ENCODE measurements at regions of chr11 and their contacts with region 1.

Region 1: DNA sequence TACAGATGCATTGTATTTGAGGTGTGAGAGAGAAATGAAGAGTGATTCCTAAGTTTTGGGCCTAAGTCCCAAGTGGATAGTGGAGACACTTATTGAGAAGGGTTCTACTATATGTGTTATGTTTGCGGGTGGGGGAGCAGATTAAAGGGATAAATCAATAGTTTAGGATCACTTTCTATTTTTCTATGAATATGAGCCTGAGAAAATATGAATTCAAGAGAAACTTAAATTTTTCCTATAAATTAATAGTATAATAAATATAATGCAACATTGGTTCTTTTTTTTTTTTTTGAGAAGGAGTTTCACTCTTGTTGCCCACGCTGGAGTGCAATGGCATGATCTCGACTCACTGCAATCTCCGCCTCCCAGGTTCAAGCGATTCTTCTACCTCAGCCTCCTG is 31.3 kb downstream of the AMBRA1 start:
- DNase-seq: no peak
- H3K4me3 ChIP-seq: no peak overlapping the region
- H3K4me3 Mint-ChIP-seq: no peak overlapping the region
- H3K27ac Mint-ChIP-seq: peak overlapping the region; percentile 3
- H3K4me1 ChIP-seq: peaks cover 17% of the 10 kb centered on the region
- H3K4me1 Mint-ChIP-seq: peaks cover 22% of the 10 kb centered on the region
- H3K27me3 ChIP-seq: no peaks in the 10 kb centered on the region
- H3K27me3 Mint-ChIP-seq: no peaks in the 10 kb centered on the region
- CTCF ChIP-seq: no peak

Region 2: DNA sequence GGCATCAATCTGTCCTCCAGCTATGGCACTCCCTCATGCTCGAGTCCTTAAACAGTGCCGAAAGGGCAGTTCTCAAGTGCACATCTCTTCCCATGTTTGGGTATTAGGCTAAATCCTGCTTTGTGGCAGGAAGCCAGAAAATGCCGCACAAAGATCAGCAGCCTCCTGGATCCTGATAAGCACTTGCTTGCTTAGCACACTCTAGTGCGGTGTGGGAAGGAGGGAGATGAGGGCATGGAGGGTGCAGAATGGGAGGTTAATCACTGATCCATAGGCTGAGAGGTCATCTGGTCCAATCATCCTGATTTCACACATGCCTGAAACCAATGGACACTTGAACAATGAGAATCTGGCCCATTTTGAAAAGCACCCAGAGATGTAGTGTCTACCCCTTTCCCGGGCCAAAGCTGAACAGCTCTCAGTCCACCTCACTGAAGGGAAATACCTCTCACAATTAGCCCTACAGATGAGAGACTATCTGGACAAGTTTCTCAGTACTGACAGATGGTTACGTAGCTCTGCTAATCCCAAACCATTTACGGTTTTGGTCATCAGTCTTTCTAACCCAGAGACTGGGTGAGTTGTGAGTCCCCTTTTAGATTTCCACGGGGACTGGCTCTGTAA is 141.2 kb before region 1 on chr11:
- CTCF ChIA-PET with region 1: no interaction called
- POLR2A ChIA-PET with region 1: no interaction called
- intact Hi-C with region 1: no loop called
- DNase-seq: no peak
- H3K4me3 ChIP-seq: no peak overlapping the region
- H3K4me3 Mint-ChIP-seq: no peak overlapping the region
- H3K27ac Mint-ChIP-seq: no peak overlapping the region
- H3K4me1 ChIP-seq: no peaks in the 10 kb centered on the region
- H3K4me1 Mint-ChIP-seq: no peaks in the 10 kb centered on the region
- H3K27me3 ChIP-seq: no peaks in the 10 kb centered on the region
- H3K27me3 Mint-ChIP-seq: no peaks in the 10 kb centered on the region
- CTCF ChIP-seq: no peak

Region 3: GRCh38 chr11:46574656-46575055 is 12.1 kb after region 1 on chr11:
- CTCF ChIA-PET with region 1: no interaction called
- POLR2A ChIA-PET with region 1: no interaction called
- intact Hi-C with region 1: no loop called
- DNase-seq: no peak
- H3K4me3 ChIP-seq: no peak overlapping the region
- H3K4me3 Mint-ChIP-seq: no peak overlapping the region
- H3K27ac Mint-ChIP-seq: peak overlapping the region; percentile 45
- H3K4me1 ChIP-seq: no peaks in the 10 kb centered on the region
- H3K4me1 Mint-ChIP-seq: peaks cover 11% of the 10 kb centered on the region
- H3K27me3 ChIP-seq: no peaks in the 10 kb centered on the region
- H3K27me3 Mint-ChIP-seq: no peaks in the 10 kb centered on the region
- CTCF ChIP-seq: no peak

Region 4: DNA sequence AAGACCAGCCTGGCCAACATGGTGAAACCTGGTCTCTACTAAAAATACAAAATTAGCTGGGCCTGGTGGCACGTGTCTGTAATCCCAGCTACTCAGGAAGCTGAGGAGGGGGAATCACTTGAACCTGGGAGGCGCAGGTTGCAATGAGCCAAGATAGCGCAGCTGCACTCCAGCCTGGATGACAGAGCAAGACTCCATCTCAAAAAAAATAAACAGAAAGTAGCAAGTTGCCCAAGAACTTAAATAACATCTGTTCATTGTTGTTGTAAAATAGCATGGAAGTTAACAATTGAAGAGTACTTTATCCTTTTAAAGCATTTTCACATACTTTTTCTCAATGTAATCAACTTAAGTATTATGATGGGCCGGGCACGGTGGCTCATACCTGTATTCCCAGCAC is 25.6 kb after region 1 on chr11:
- CTCF ChIA-PET with region 1: no interaction called
- POLR2A ChIA-PET with region 1: no interaction called
- intact Hi-C with region 1: no loop called
- DNase-seq: no peak
- H3K4me3 ChIP-seq: no peak overlapping the region
- H3K4me3 Mint-ChIP-seq: no peak overlapping the region
- H3K27ac Mint-ChIP-seq: no peak overlapping the region
- H3K4me1 ChIP-seq: peaks cover 23% of the 10 kb centered on the region
- H3K4me1 Mint-ChIP-seq: peaks cover 17% of the 10 kb centered on the region
- H3K27me3 ChIP-seq: no peaks in the 10 kb centered on the region
- H3K27me3 Mint-ChIP-seq: no peaks in the 10 kb centered on the region
- CTCF ChIP-seq: no peak

Region 5: GRCh38 chr11:46876471-46876870 is 313.9 kb after region 1 on chr11:
- CTCF ChIA-PET with region 1: no interaction called
- POLR2A ChIA-PET with region 1: interaction called, 10 read pairs
- intact Hi-C with region 1: no loop called
- DNase-seq: no peak
- H3K4me3 ChIP-seq: no peak overlapping the region
- H3K4me3 Mint-ChIP-seq: no peak overlapping the region
- H3K27ac Mint-ChIP-seq: no peak overlapping the region
- H3K4me1 ChIP-seq: no peaks in the 10 kb centered on the region
- H3K4me1 Mint-ChIP-seq: no peaks in the 10 kb centered on the region
- H3K27me3 ChIP-seq: no peaks in the 10 kb centered on the region
- H3K27me3 Mint-ChIP-seq: no peaks in the 10 kb centered on the region
- CTCF ChIP-seq: no peak